Activated naive CD8-positive, alpha-beta T cell treated with anti-CD3 and anti-CD28 coated beads, Interleukin-2, amount 10 ng/mL, durations not matched to agents 7 days and 5 days (primary cell): ENCODE measurements at regions of chr14 and their contacts with region 1.

Region 1: GRCh38 chr14:20489093-20489994 is 16.0 kb upstream of the RNASE10 start:
- DNase-seq: no peak
- ATAC-seq: peak; percentile 74
- H3K4me3 Mint-ChIP-seq: peak overlapping the region; percentile 69
- H3K27ac Mint-ChIP-seq: peak overlapping the region; percentile 91
- H3K4me1 Mint-ChIP-seq: peaks cover 54% of the 10 kb centered on the region
- H3K27me3 Mint-ChIP-seq: no peaks in the 10 kb centered on the region

Region 2: GRCh38 chr14:20469242-20469889 is 20.0 kb before region 1 on chr14 and contains the start of gene PNP:
- POLR2A ChIA-PET with region 1: interaction called, 10 read pairs
- DNase-seq: peak; percentile 86
- ATAC-seq: peak; percentile 94
- H3K4me3 Mint-ChIP-seq: peak within 1 kb of the TSS; percentile 99
- H3K27ac Mint-ChIP-seq: peak within 1 kb of the TSS; percentile 99
- H3K4me1 Mint-ChIP-seq: peaks cover 42% of the 10 kb centered on the region
- H3K27me3 Mint-ChIP-seq: no peaks in the 10 kb centered on the region
- total RNA-seq, gene PNP: 135 to 141 TPM